Heart right ventricle (tissue), 16 donors: ENCODE measurements at regions of chr1 and their contacts with region 1.

Region 1: DNA sequence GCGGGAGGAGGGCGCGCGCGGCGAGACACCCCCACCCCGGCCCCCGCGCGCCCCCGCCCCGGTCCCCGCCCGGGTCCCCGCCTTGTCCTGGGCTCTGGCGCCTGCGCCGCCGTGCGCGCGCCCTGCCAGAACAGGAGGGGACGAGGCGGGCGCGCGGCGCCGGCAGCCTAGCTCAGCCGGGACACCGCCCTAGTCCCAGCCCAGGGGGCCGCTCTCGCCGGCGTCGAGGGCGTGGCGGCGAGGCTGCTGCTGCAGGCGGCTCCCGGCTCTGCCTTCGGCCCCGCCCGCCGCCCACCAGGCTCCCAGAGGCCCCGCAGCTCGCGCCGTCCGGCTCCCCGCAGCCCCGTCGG is at the start of gene RCAN3:
- DNase-seq: peak; percentile 77 to 89
- ATAC-seq: peak; percentile 95 to 99 (median 97)
- H3K4me3 ChIP-seq: peak within 1 kb of the TSS; percentile 40 to 87 (median 76)
- H3K27ac ChIP-seq: peak within 1 kb of the TSS; percentile 60 to 92 (median 88)
- H3K4me1 ChIP-seq: peaks cover 0 to 26% (median 20%) of the 10 kb centered on the region in 9 donors
- H3K27me3 ChIP-seq: peaks cover 0 to 4% (median 0%) of the 10 kb centered on the region in 7 donors
- CTCF ChIP-seq: no peak
- total RNA-seq, gene RCAN3: 3.6 to 7.9 (median 5.8) TPM

Region 2: DNA sequence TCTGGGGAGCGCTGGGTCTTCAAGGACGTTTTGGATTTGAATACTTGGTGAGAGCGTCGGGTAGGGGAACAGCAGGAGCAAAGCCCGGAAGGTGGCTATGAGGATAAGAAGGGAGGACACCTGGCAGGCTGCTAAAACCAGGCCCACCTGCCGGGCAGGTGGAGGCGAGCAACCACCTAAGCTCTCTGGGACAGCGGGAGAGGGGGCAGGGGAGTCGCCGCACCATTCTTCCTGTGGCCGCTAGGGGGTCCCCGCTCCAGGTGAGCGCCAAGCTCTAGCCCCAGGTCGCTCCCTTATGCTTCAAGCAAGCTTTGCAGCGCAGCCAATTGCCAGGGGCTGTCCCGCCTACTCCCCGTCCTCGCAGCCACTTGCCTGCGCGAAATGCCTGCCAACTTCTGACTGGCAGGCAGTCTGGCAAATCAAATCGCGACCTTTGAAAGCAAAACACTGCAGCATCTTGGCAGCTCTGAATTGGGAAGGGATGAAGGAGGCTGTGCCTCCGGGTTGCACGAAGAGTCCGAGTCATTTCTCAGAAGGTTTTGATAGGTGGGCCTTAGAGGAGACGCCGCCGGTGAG is 87.3 kb before region 1 on chr1 and contains the start of gene NIPAL3:
- intact Hi-C with region 1: loop called in 5 of 10 experiments (anchors 1 to 10 kb)
- DNase-seq: peak; percentile 96 to 99
- ATAC-seq: peak; percentile 94 to 98 (median 96)
- H3K4me3 ChIP-seq: peak within 1 kb of the TSS; percentile 50 to 84 (median 74)
- H3K27ac ChIP-seq: peak within 1 kb of the TSS in 8 of 10 donors; percentile 3 to 75 (median 33)
- H3K4me1 ChIP-seq: peaks cover 7 to 51% (median 27%) of the 10 kb centered on the region in 9 donors
- H3K27me3 ChIP-seq: no peaks in the 10 kb centered on the region
- CTCF ChIP-seq: peak; percentile 77 to 83 (median 81)
- total RNA-seq, gene NIPAL3: 21.5 to 44.9 (median 27.2) TPM

Region 3: GRCh38 chr1:24454673-24455072 is 48.0 kb before region 1 on chr1:
- intact Hi-C with region 1: loop called in 1 of 10 experiments (anchors 5 kb)
- DNase-seq: no peak
- ATAC-seq: no peak
- H3K4me3 ChIP-seq: no peak overlapping the region
- H3K27ac ChIP-seq: no peak overlapping the region
- H3K4me1 ChIP-seq: no peaks in the 10 kb centered on the region
- H3K27me3 ChIP-seq: no peaks in the 10 kb centered on the region
- CTCF ChIP-seq: no peak

Region 4: DNA sequence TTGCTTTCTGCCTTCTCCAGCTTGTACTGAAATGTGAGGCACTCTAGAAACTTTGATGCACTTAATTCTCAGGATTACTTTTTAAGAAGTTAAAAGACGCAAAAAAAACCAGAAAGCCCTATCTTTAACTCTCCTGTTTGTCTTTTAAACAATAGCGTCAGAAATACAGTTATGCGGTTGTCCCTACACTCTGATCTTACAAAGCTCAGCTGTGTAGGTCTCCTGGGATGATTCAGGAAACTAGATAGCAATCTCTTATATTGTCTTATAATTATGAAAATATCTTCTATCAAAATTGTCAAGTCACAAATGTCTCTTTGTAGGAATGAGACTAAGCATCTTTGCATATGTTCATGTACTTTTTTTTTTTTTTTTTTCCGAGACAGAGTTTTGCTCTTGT is 27.0 kb before region 1 on chr1:
- intact Hi-C with region 1: loop called in 1 of 10 experiments (anchors 2 kb)
- DNase-seq: no peak
- ATAC-seq: peak in 5 of 8 donors; percentile 47 to 66 (median 55)
- H3K4me3 ChIP-seq: no peak overlapping the region
- H3K27ac ChIP-seq: no peak overlapping the region
- H3K4me1 ChIP-seq: peaks cover 0 to 7% (median 0%) of the 10 kb centered on the region in 9 donors
- H3K27me3 ChIP-seq: no peaks in the 10 kb centered on the region
- CTCF ChIP-seq: no peak